ENCODE measurements at regions of chr5 and their contacts with region 1.

Region 1: DNA sequence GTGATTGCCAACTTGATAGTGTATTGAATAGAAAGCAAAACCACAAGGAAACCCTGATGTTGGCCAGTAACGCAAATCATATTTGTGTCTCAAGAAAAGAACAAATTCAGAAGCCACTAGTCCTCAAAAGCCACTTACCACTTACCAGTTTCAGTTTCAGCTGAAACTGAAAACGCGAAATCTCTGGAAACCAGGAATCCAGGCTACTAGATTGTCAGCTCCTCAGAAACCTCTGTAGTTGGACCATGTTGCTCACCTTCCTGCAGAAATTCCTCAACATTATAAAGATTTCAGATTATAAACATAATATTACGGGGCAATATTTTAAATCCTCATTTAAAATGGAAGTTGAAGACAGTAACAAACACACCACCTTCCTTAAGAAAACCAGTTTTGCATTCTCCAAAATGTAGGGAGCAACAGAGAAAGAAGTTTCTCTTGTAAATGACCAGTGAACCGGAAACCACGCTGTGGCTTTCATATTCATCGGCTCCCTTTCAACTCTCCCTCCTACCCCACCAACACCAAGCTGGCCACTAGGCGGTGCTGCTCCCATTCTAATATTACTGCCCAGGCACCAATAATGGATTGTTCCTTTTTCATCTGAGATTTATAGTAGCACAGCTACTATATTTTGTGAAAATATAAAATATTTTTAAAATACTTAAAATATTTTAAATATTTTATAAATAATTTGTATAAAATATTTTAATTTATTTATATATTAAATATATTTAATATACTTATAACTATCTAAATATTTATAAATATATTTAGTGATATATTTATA is 8.7 kb upstream of the TMED7 start:
- DNase-seq: peak; percentile 93
- ATAC-seq: peak; percentile 86
- H3K4me3 Mint-ChIP-seq: peak overlapping the region; percentile 60
- H3K27ac Mint-ChIP-seq: peak overlapping the region; percentile 65
- H3K4me1 Mint-ChIP-seq: peaks cover 48% of the 10 kb centered on the region
- H3K27me3 Mint-ChIP-seq: peaks cover 50% of the 10 kb centered on the region

Region 2: DNA sequence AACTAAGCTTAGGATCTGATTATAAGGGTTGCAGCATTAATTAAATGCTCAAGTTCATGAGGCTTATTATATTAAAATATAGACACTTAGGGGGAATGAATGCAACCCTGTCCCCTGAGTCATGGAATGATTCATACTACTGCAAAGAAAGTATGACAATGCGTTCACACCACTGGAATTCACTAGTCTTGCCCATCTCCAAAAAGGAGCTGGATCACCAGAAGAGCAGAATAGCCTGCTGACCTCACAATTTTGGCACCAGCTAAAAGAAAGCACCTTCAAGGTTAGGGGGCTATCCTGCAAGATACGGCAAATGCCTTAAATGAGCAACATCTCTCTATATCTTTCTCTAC is 23.3 kb after region 1 on chr5:
- CTCF ChIA-PET with region 1: no interaction called
- DNase-seq: no peak
- ATAC-seq: no peak
- H3K4me3 Mint-ChIP-seq: no peak overlapping the region
- H3K27ac Mint-ChIP-seq: no peak overlapping the region
- H3K4me1 Mint-ChIP-seq: no peaks in the 10 kb centered on the region
- H3K27me3 Mint-ChIP-seq: peaks cover 47% of the 10 kb centered on the region

Region 3: DNA sequence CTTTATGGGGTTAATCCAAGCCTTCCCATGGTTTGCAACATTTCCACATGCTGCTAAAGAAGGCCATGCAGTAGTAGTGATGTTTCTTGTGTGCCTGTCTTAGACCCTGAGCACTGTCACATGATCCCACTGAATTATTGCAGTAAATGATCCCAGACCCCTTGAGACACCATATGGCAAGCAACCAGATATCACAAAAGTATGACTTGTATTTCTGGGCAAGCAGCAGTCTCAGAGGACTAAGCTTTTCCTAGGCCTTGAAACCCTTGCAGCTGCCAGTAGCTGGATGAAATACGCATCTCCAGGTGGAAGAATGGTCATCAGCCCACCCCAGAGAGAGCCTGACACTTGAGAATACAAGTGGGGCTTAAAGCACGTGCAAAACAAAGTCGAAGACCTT is 140.1 kb after region 1 on chr5:
- CTCF ChIA-PET with region 1: no interaction called
- DNase-seq: no peak
- ATAC-seq: no peak
- H3K4me3 Mint-ChIP-seq: no peak overlapping the region
- H3K27ac Mint-ChIP-seq: no peak overlapping the region
- H3K4me1 Mint-ChIP-seq: no peaks in the 10 kb centered on the region
- H3K27me3 Mint-ChIP-seq: peaks cover 40% of the 10 kb centered on the region

Region 4: GRCh38 chr5:115841382-115842088 is 207.0 kb after region 1 on chr5 and contains the starts of genes AP3S1 and ATG12:
- CTCF ChIA-PET with region 1: interaction called, 32 read pairs
- DNase-seq: peak; percentile 94
- ATAC-seq: peak; percentile 90
- H3K4me3 Mint-ChIP-seq: peak within 1 kb of the TSS; percentile 98
- H3K27ac Mint-ChIP-seq: peak within 1 kb of the TSS; percentile 100
- H3K4me1 Mint-ChIP-seq: peaks cover 53% of the 10 kb centered on the region
- H3K27me3 Mint-ChIP-seq: no peaks in the 10 kb centered on the region
- total RNA-seq, gene AP3S1: 57.1 to 66.2 TPM
- total RNA-seq, gene ATG12: 36.5 to 36.9 TPM